ENCODE measurements at regions of chr1 and their contacts with region 1.

Region 1: DNA sequence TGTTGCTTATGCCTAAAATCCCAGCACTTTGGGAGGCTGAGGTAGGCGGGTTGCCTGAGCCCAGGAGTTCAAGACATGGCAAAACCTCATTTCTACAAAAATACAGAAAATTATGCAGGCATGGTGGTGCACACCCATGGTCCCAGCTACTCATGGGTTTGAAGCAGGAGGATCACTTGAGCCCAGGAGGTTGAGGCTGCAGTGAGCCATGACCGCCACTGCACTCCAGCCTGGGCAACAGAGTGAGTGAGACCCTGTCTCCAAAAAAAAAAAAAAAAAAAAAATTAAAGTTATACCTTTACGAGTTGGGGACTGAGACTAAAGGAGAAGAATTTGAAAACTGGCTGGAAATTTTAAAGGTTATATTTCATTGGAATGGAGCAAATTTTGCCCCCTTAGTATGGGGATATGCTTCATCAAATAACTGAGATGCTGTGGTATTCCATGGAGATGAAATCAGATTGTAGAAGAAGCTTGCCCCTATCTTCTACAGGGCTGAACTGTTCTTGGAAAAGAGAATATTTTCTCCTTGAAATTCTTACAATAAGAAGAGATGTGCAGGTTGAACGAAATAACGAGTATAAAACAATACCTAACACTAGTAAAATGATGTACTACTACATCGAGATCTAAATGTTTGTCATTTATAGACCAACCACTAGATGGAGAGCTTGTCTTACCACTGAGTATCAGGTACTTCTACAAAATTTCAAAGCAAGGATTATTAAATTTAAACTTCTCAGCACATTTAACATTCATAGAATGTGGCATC is 34.9 kb upstream of the SCYL3 start:
- DNase-seq: peak; percentile 32
- H3K4me3 ChIP-seq: no peak overlapping the region
- H3K27ac ChIP-seq: no peak overlapping the region
- H3K4me1 ChIP-seq: no peaks in the 10 kb centered on the region
- H3K27me3 ChIP-seq: no peaks in the 10 kb centered on the region
- CTCF ChIP-seq: peak; percentile 59 to 65

Region 2: DNA sequence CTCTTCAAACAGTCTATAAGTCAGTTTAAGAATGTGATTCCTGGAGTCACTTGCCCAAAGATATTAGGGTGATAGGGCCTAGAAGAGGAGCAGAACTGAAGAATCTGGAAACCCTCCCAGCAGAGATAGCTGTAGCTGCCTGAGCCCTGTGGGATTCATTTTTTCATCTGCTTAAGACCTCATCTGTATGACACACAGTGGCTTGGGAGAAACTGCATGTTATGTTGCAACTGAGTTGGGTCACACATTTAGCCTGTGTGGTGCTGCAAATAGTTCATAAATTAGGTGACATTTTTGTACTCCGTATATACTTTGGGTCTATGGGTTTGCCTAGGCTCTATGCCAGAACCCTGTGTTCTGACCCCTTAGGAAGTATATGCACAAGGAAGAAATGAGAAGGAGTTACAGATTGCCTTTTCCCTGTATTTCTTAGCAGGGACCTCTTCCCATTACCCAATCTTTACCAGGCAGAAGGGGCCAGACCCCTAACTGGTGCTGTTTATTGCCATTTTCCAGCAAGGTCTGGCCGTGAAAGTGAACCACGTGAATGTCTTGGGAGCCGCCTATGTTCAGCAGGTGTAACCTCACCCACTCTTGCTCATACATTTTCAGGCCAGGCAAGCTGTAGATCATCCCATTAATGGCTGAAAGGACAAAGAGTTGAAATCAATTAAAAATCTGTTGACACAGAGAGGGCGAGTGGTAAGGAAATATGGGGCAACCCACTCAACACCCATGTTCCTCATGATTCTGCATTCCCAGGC is 401.0 kb before region 1 on chr1:
- CTCF ChIA-PET with region 1: no interaction called
- dilution Hi-C with region 1: no loop called
- in situ Hi-C with region 1: no loop called
- intact Hi-C with region 1: no loop called
- DNase-seq: no peak
- H3K4me3 ChIP-seq: no peak overlapping the region
- H3K27ac ChIP-seq: no peak overlapping the region
- H3K4me1 ChIP-seq: peaks cover 27% of the 10 kb centered on the region
- H3K27me3 ChIP-seq: no peaks in the 10 kb centered on the region
- CTCF ChIP-seq: no peak

Region 3: DNA sequence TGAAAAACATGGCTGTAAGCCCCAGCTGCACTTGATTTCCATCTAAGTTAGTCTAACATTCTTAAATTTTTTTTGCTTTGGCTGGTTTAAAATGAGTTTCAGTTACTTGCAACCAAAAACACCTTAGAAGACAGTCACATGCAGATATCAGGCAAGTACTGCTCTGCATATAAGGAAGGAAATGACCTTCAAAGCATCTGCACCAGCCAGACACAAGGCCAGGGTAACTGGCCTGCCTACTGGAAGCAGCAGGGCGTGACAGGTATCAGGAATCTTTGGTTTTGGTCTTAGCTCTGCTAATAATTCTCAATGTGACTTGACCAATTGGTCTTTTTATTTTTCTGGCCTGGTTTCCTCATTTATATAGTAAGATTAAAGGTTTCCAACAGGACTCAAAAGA is 68.4 kb before region 1 on chr1:
- CTCF ChIA-PET with region 1: no interaction called
- dilution Hi-C with region 1: no loop called
- in situ Hi-C with region 1: no loop called
- intact Hi-C with region 1: no loop called
- DNase-seq: no peak
- H3K4me3 ChIP-seq: no peak overlapping the region
- H3K27ac ChIP-seq: no peak overlapping the region
- H3K4me1 ChIP-seq: no peaks in the 10 kb centered on the region
- H3K27me3 ChIP-seq: no peaks in the 10 kb centered on the region
- CTCF ChIP-seq: no peak

Region 4: GRCh38 chr1:170074250-170075157 is 145.9 kb after region 1 on chr1 and contains the start of gene KIFAP3:
- CTCF ChIA-PET with region 1: no interaction called
- dilution Hi-C with region 1: no loop called
- in situ Hi-C with region 1: no loop called
- intact Hi-C with region 1: loop called (anchors 2 kb)
- DNase-seq: peak; percentile 99
- H3K4me3 ChIP-seq: peak within 1 kb of the TSS; percentile 89 to 94 (median 93)
- H3K27ac ChIP-seq: peak within 1 kb of the TSS; percentile 84
- H3K4me1 ChIP-seq: peaks cover 5% of the 10 kb centered on the region
- H3K27me3 ChIP-seq: no peaks in the 10 kb centered on the region
- CTCF ChIP-seq: peak; percentile 52 to 67
- total RNA-seq, gene KIFAP3: 28.8 to 33.9 TPM

Region 5: DNA sequence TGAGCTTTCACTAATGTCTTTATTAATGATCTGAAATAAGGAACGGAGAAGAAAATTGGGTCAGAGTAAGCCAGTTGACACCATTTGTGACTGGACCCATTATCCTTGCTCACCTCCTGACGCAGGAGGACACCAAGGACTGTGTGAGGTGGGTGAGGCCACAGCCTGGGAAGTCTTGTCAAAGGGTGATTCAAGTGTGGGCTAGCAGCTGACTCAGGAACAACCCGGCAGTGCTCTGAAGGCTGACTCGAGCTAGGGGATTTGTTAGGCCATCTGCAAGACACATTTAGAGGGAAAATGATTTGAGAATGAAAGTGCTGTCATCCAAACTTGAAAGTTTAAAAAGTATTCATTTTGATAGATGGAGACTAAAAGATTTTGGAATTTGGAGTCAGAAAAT is 756.5 kb after region 1 on chr1:
- CTCF ChIA-PET with region 1: no interaction called
- dilution Hi-C with region 1: no loop called
- in situ Hi-C with region 1: no loop called
- intact Hi-C with region 1: loop called (anchors 5 kb)
- DNase-seq: peak; percentile 45
- H3K4me3 ChIP-seq: no peak overlapping the region
- H3K27ac ChIP-seq: no peak overlapping the region
- H3K4me1 ChIP-seq: no peaks in the 10 kb centered on the region
- H3K27me3 ChIP-seq: no peaks in the 10 kb centered on the region
- CTCF ChIP-seq: no peak

Region 6: DNA sequence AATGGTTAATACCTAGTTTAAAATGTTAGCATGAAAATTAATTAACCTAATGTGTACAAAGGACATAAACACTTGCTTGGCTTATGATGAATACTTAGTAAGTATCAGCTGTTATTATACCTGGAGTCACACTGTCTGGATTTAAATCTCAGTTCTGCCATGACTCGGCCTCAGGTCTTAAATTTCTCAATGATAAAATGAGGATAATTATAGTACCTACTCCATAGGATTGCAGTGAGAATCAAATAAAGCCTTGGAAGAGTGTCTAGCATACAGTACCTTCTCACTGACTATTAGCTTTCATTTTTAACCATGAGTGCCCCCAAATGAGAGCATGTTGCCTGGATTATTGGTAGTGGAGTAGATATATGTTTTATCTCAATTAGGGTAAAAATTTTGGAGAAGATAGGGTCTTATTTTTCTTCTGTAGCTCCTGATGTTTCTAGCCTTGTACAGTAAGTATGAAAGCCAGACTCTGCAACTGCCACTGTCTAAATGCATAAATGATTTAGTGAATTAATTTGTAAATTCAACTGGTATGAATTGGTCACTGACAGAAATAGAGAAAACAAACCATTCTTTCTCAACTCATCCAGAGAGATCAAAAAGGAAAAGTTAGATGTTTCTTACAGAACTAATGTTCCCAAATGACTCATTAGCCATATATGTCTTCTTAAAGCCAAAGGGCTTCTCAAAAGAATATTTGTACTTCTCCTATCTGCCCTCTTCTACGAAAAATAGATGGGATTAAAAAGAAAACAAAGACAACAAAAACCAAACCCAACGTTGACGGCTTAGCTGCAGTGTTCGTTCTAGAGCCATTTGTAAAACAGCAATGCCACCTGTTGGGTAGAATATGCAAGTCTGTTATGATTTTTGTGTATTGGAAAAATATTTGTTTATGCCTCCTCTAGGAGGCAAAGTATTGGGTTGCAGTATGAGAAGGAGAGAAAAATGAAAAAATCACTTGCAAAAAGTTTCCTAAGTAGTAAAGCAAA is 952.9 kb after region 1 on chr1:
- CTCF ChIA-PET with region 1: interaction called, 28 read pairs
- dilution Hi-C with region 1: no loop called
- in situ Hi-C with region 1: no loop called
- intact Hi-C with region 1: no loop called
- DNase-seq: peak; percentile 12
- H3K4me3 ChIP-seq: no peak overlapping the region
- H3K27ac ChIP-seq: no peak overlapping the region
- H3K4me1 ChIP-seq: no peaks in the 10 kb centered on the region
- H3K27me3 ChIP-seq: no peaks in the 10 kb centered on the region
- CTCF ChIP-seq: peak; percentile 34 to 50

Region 7: GRCh38 chr1:171226747-171227370 is 1298.2 kb after region 1 on chr1:
- CTCF ChIA-PET with region 1: no interaction called
- dilution Hi-C with region 1: no loop called
- in situ Hi-C with region 1: no loop called
- intact Hi-C with region 1: loop called (anchors 5 kb)
- DNase-seq: peak; percentile 55
- H3K4me3 ChIP-seq: no peak overlapping the region
- H3K27ac ChIP-seq: no peak overlapping the region
- H3K4me1 ChIP-seq: peaks cover 20% of the 10 kb centered on the region
- H3K27me3 ChIP-seq: no peaks in the 10 kb centered on the region
- CTCF ChIP-seq: peak; percentile 53 to 86

Measured in mammary epithelial cell (primary cell).